ENCODE measurements at regions of chr19 and their contacts with region 1.

Region 1: DNA sequence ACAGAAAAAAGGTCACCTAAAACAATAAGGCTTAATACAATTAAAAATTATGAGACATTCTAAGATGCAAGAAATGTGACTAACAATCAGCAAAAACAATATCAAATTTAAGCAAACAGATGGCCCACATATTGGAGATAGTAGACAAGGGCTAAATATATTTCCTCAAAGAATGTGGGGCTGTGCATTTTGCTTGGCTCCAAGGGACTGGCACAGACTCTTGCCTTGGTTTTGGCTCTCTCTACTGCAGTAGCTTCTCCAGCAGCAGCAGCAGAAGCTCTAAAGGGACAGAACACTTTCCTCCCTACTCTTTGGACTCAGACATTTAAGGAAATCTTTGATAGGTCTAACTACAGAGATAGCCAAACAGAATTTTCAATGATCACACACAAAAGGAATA is 38.2 kb upstream of the ZNF780A start:
- DNase-seq: no peak
- ATAC-seq: no peak
- H3K4me3 ChIP-seq: no peak overlapping the region
- H3K4me3 Mint-ChIP-seq: no peak overlapping the region
- H3K27ac ChIP-seq: no peak overlapping the region
- H3K27ac Mint-ChIP-seq: no peak overlapping the region
- H3K4me1 ChIP-seq: no peaks in the 10 kb centered on the region
- H3K4me1 Mint-ChIP-seq: no peaks in the 10 kb centered on the region
- H3K27me3 ChIP-seq: peaks cover 0 to 2% of the 10 kb centered on the region in 2 experiments
- H3K27me3 Mint-ChIP-seq: peaks cover 23% of the 10 kb centered on the region
- CTCF ChIP-seq: no peak

Region 2: GRCh38 chr19:40155749-40156265 is 26.8 kb after region 1 on chr19:
- CTCF ChIA-PET with region 1: no interaction called
- POLR2A ChIA-PET with region 1: no interaction called
- intact Hi-C with region 1: no loop called
- DNase-seq: peak in 2 of 9 experiments; percentile 24 to 54
- ATAC-seq: no peak
- H3K4me3 ChIP-seq: no peak overlapping the region
- H3K4me3 Mint-ChIP-seq: no peak overlapping the region
- H3K27ac ChIP-seq: no peak overlapping the region
- H3K27ac Mint-ChIP-seq: no peak overlapping the region
- H3K4me1 ChIP-seq: peaks cover 4% of the 10 kb centered on the region
- H3K4me1 Mint-ChIP-seq: peaks cover 9% of the 10 kb centered on the region
- H3K27me3 ChIP-seq: no peaks in the 10 kb centered on the region
- H3K27me3 Mint-ChIP-seq: no peaks in the 10 kb centered on the region
- CTCF ChIP-seq: no peak

Region 3: DNA sequence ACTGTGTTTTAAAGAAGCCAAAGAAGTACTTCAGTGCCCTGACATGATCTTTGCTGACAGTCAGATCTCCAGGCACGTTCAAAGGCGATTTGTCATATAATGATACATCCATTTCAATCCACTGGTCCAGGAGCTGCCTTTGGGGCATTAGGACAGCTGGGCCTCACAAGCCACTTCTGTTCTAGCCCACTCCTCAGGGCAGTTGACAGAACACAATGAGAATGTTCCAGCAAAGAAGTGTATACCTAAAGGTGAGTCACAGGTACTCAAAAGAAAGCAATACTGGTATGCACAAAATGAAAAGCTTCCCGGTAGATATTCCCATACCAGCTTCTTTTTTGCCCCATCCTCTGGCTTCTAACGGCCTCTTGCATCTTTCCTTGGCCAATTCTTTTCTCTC is 49.8 kb after region 1 on chr19:
- CTCF ChIA-PET with region 1: no interaction called
- POLR2A ChIA-PET with region 1: no interaction called
- intact Hi-C with region 1: no loop called
- DNase-seq: no peak
- ATAC-seq: no peak
- H3K4me3 ChIP-seq: no peak overlapping the region
- H3K4me3 Mint-ChIP-seq: no peak overlapping the region
- H3K27ac ChIP-seq: no peak overlapping the region
- H3K27ac Mint-ChIP-seq: no peak overlapping the region
- H3K4me1 ChIP-seq: no peaks in the 10 kb centered on the region
- H3K4me1 Mint-ChIP-seq: no peaks in the 10 kb centered on the region
- H3K27me3 ChIP-seq: no peaks in the 10 kb centered on the region
- H3K27me3 Mint-ChIP-seq: peaks cover 10% of the 10 kb centered on the region
- CTCF ChIP-seq: no peak

Region 4: GRCh38 chr19:40221858-40222837 is 93.2 kb after region 1 on chr19:
- CTCF ChIA-PET with region 1: no interaction called
- POLR2A ChIA-PET with region 1: no interaction called
- intact Hi-C with region 1: loop called in 1 of 2 experiments (anchors 5 kb)
- DNase-seq: peak; percentile 47 to 91 (median 76)
- ATAC-seq: peak; percentile 77
- H3K4me3 ChIP-seq: no peak overlapping the region
- H3K4me3 Mint-ChIP-seq: no peak overlapping the region
- H3K27ac ChIP-seq: no peak overlapping the region
- H3K27ac Mint-ChIP-seq: no peak overlapping the region
- H3K4me1 ChIP-seq: peaks cover 21% of the 10 kb centered on the region
- H3K4me1 Mint-ChIP-seq: peaks cover 16% of the 10 kb centered on the region
- H3K27me3 ChIP-seq: peaks cover 39 to 42% of the 10 kb centered on the region in 2 experiments
- H3K27me3 Mint-ChIP-seq: peaks cover 49% of the 10 kb centered on the region
- CTCF ChIP-seq: peak; percentile 88

Region 5: GRCh38 chr19:40257057-40257517 is 128.1 kb after region 1 on chr19:
- CTCF ChIA-PET with region 1: no interaction called
- POLR2A ChIA-PET with region 1: no interaction called
- intact Hi-C with region 1: no loop called
- DNase-seq: no peak
- ATAC-seq: no peak
- H3K4me3 ChIP-seq: no peak overlapping the region
- H3K4me3 Mint-ChIP-seq: no peak overlapping the region
- H3K27ac ChIP-seq: no peak overlapping the region
- H3K27ac Mint-ChIP-seq: no peak overlapping the region
- H3K4me1 ChIP-seq: no peaks in the 10 kb centered on the region
- H3K4me1 Mint-ChIP-seq: peaks cover 42% of the 10 kb centered on the region
- H3K27me3 ChIP-seq: no peaks in the 10 kb centered on the region
- H3K27me3 Mint-ChIP-seq: no peaks in the 10 kb centered on the region
- CTCF ChIP-seq: no peak

Region 6: GRCh38 chr19:40444192-40445028 is 315.4 kb after region 1 on chr19 and contains the start of gene SERTAD3:
- CTCF ChIA-PET with region 1: no interaction called
- POLR2A ChIA-PET with region 1: no interaction called
- intact Hi-C with region 1: no loop called
- DNase-seq: peak; percentile 93 to 98 (median 97)
- ATAC-seq: peak; percentile 69
- H3K4me3 ChIP-seq: peak within 1 kb of the TSS; percentile 67 to 82
- H3K4me3 Mint-ChIP-seq: peak within 1 kb of the TSS; percentile 99
- H3K27ac ChIP-seq: peak within 1 kb of the TSS; percentile 74 to 80
- H3K27ac Mint-ChIP-seq: peak within 1 kb of the TSS; percentile 96
- H3K4me1 ChIP-seq: peaks cover 15% of the 10 kb centered on the region
- H3K4me1 Mint-ChIP-seq: peaks cover 22% of the 10 kb centered on the region
- H3K27me3 ChIP-seq: no peaks in the 10 kb centered on the region
- H3K27me3 Mint-ChIP-seq: no peaks in the 10 kb centered on the region
- CTCF ChIP-seq: no peak
- total RNA-seq, gene SERTAD3: 27.9 to 33.4 TPM